K562 (cell line): ENCODE measurements at regions of chrX and their contacts with region 1.

Region 1: DNA sequence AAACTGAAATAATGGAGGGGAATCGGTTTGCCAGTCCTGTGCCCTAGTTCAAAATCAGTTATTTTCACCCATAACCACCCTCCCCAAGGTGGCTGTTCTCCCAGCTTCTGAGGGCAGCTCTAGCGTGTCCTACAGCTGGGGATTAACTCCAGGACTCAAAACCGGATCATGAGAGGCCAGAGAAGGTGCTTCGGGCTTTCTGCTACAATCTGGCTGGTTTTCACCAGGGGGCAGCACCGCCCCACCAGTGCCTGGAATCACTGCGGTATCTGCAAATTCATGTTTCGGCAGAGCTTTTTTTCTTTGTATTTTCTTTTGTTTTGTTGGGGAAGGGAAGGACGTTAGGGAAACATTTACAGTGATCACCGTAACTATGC is 28.4 kb downstream of the PDHA1 start:
- DNase-seq: peak; percentile 63 to 69 (median 67)
- ATAC-seq: peak; percentile 95
- H3K4me3 ChIP-seq: no peak overlapping the region
- H3K27ac ChIP-seq: no peak overlapping the region
- H3K4me1 ChIP-seq: no peaks in the 10 kb centered on the region
- H3K27me3 ChIP-seq: peaks cover 3 to 41% of the 10 kb centered on the region in 2 experiments; a peak in 4 of 5 replicates
- CTCF ChIP-seq: peak; percentile 77 to 81 (median 79)
- EP300 ChIP-seq: no peak
- POLR2A ChIP-seq: no peak
- RAD21 ChIP-seq: peak; percentile 77 to 85

Region 2: DNA sequence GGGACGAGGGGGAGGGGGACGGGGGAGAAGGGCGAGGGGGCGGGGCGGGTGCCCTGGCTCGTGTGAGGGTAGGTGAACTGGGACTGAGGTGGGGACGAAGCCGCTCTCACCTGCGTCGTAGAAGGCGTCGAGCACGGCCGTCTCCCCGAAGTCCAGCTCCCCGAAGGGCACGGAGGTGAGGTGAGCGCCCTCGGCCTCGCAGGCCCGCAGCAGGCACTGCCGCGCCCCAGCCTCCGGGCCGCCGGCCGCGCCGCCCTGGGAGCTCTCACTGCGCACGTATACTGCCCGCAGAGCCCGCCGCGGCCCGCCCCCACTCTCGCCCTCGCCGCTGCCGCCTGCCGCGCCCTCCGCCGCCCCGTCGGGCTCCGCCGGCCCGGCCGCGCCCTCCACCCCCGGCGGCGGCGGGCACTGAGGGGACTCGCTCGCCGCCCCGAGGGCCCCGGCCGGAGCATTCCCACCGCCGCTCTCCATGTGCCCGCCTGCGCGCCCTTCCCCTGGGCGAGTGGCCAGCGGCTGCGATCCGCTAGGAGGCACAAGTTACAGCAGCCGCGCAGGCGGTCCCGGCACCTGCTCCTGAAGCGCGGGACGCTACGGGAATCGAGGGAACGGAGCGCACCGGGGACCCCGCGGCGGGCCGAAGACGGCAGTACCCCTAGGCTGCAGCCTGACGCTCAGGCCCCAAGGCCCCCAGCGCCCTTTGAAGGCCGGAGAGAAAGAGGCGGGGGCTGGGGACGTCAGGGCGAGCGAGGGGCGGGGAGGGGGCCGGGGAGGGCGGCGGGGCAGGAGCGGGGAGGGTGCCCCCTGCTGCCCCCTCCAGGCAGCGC is 142.8 kb after region 1 on chrX and contains the start of gene MAP3K15:
- CTCF ChIA-PET with region 1: no interaction called
- POLR2A ChIA-PET with region 1: no interaction called
- in situ Hi-C with region 1: loop called (anchors 10 kb)
- intact Hi-C with region 1: no loop called
- DNase-seq: peak; percentile 7 to 31 (median 27)
- ATAC-seq: peak; percentile 73
- H3K4me3 ChIP-seq: no peak within 1 kb of the TSS
- H3K27ac ChIP-seq: no peak within 1 kb of the TSS
- H3K4me1 ChIP-seq: no peaks in the 10 kb centered on the region
- H3K27me3 ChIP-seq: no peaks in the 10 kb centered on the region
- CTCF ChIP-seq: no peak
- EP300 ChIP-seq: no peak
- POLR2A ChIP-seq: no peak
- RAD21 ChIP-seq: no peak
- polyA plus RNA-seq, gene MAP3K15: not detected

Region 3: DNA sequence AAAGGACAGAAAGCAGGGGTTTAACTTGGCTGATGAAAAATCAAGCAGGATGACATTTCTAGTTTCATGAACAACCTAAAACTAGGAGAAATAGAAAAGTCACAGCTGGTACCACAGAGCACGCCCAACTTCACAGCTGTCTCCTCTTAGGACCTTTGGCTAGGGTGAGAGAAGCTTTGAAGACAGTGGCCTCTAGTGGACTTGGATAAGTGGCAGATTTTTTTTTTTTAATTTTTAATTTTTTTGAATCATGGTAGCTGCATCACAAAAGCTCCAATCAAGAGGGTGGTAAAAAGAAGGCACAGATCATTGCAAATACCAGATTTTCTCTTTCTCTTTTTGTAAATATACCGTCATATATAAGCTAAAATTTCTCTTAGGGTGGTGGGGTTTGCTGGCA is 163.3 kb after region 1 on chrX:
- CTCF ChIA-PET with region 1: interaction called, 7 read pairs
- POLR2A ChIA-PET with region 1: no interaction called
- in situ Hi-C with region 1: no loop called
- intact Hi-C with region 1: loop called (anchors 2 kb)
- DNase-seq: peak in 2 of 4 experiments; percentile 21 to 23
- ATAC-seq: peak; percentile 63; the same call in 2 of the 3 replicates
- H3K4me3 ChIP-seq: no peak overlapping the region
- H3K27ac ChIP-seq: no peak overlapping the region
- H3K4me1 ChIP-seq: no peaks in the 10 kb centered on the region
- H3K27me3 ChIP-seq: peaks cover 0 to 10% of the 10 kb centered on the region in 2 experiments; a peak in 1 of 5 replicates
- CTCF ChIP-seq: peak in 2 of 3 experiments; percentile 45 to 63; a peak in 3 of 6 replicates
- EP300 ChIP-seq: no peak
- POLR2A ChIP-seq: no peak
- RAD21 ChIP-seq: peak; percentile 32 to 53; a peak in 3 of 4 replicates